ENCODE measurements at regions of chr11 and their contacts with region 1.

Region 1: DNA sequence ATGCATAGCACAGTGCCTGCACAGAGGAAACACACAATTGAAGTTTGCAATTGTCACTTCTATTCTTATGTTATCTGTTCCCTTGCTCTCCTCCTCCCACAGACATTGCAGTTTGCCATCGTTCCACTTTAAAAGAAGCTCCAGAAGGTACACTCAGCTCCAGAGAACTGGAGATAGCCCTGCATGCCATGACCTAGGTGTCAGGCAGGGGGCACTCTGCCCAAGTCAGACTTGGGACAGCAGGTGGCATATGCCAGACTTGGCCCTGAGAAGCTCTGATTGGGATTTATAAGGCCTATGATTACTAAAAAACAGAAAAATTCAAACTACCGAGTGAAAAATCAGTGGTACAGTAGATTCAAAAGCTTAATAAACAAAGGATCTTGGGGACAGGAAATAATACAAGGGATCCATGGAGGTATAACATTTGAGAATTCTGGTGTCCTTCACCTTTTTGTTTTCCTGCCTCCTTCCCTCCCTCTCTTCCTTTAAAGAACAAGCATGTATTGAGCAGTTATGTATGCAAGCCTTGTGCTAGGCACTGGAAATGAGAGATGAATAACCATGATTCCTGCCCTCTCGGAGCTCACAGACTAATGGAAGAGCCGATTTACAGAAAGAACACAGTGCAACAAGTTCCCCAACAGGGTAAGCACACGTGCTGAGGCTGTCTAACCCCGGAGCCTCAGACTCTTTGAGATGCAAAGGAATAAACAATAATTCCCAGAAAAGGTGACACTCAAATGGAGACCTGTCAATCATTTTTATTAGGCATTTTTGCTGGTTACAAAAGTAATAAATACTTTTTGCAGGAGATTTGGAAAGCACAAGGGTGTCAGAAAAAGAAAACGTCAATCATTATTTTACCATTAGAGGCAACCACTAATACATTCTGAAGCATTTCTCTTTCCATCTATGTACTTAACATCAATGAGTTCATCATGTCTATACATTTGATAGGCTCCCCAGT is 39.8 kb downstream of the TENM4 start:
- DNase-seq: no peak
- ATAC-seq: no peak
- H3K4me3 ChIP-seq: no peak overlapping the region
- H3K27ac ChIP-seq: no peak overlapping the region
- H3K4me1 ChIP-seq: no peaks in the 10 kb centered on the region
- H3K27me3 ChIP-seq: no peaks in the 10 kb centered on the region
- CTCF ChIP-seq: peak in 2 of 5 experiments; percentile 34 to 44
- POLR2A ChIP-seq: no peak

Region 2: GRCh38 chr11:79331203-79331901 is 69.7 kb before region 1 on chr11:
- in situ Hi-C with region 1: no loop called
- intact Hi-C with region 1: no loop called
- DNase-seq: no peak
- ATAC-seq: no peak
- H3K4me3 ChIP-seq: no peak overlapping the region
- H3K27ac ChIP-seq: no peak overlapping the region
- H3K4me1 ChIP-seq: peaks cover 0 to 3% of the 10 kb centered on the region in 2 donors
- H3K27me3 ChIP-seq: no peaks in the 10 kb centered on the region
- CTCF ChIP-seq: no peak
- POLR2A ChIP-seq: no peak

Region 3: GRCh38 chr11:79461144-79461543 is 60.1 kb after region 1 on chr11:
- in situ Hi-C with region 1: no loop called
- intact Hi-C with region 1: no loop called
- DNase-seq: no peak
- ATAC-seq: no peak
- H3K4me3 ChIP-seq: no peak overlapping the region
- H3K27ac ChIP-seq: no peak overlapping the region
- H3K4me1 ChIP-seq: no peaks in the 10 kb centered on the region
- H3K27me3 ChIP-seq: no peaks in the 10 kb centered on the region
- CTCF ChIP-seq: no peak
- POLR2A ChIP-seq: no peak

Region 4: GRCh38 chr11:79493555-79494171 is 92.7 kb after region 1 on chr11:
- in situ Hi-C with region 1: no loop called
- intact Hi-C with region 1: loop called (anchors 2 kb)
- DNase-seq: peak; percentile 11 to 33
- ATAC-seq: peak in 1 of 2 donors; percentile 56
- H3K4me3 ChIP-seq: no peak overlapping the region
- H3K27ac ChIP-seq: no peak overlapping the region
- H3K4me1 ChIP-seq: no peaks in the 10 kb centered on the region
- H3K27me3 ChIP-seq: no peaks in the 10 kb centered on the region
- CTCF ChIP-seq: peak; percentile 45 to 81 (median 67)
- POLR2A ChIP-seq: no peak

Measured in gastrocnemius medialis (tissue), 4 donors.